PC-9 (cell line): ENCODE measurements at regions of chr5 and their contacts with region 1.

Region 1: DNA sequence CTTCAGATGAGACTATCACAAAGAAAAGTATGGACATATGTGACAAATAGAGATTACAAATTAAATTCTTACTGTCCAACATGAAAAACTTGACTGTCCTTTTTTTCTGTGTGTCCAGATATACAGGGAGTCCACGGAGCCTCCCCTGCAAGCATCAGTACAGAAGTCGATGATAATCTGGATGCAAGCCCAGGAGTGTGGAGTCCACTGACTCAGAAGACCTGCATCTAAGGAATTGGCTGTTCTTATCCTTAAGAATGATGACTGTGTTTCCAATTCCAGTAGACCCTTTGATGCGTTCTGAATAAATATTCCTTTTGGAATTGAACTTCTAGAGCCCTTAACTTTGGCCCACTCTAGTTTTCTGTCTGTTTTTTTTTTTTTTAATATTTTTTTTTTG is 56.7 kb upstream of the TAF11L2 start:
- DNase-seq: no peak
- H3K4me3 ChIP-seq: no peak overlapping the region
- H3K27ac ChIP-seq: no peak overlapping the region
- H3K4me1 ChIP-seq: peaks cover 12% of the 10 kb centered on the region
- H3K27me3 ChIP-seq: peaks cover 22% of the 10 kb centered on the region
- CTCF ChIP-seq: no peak

Region 2: DNA sequence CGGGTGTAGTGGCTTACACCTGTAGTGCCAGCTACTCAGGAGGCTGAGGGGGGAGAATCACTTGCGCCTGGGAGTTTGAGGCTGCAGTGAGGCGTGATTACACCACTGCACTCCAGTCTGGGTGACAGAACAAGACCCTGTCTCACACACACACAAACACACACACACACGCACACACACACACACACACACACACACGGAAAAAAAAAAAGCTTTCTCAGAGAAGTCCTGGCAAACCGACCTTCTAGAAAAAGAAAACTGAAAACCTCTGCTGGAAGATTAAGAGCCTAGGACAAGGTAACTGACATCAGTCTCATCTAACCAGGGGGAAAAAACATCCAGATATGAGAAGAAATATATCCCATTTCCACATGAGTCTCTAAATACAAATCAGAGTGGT is 684.2 kb before region 1 on chr5:
- CTCF ChIA-PET with region 1: no interaction called
- POLR2A ChIA-PET with region 1: interaction called, 21 read pairs
- intact Hi-C with region 1: no loop called
- DNase-seq: no peak
- H3K4me3 ChIP-seq: no peak overlapping the region
- H3K27ac ChIP-seq: no peak overlapping the region
- H3K4me1 ChIP-seq: no peaks in the 10 kb centered on the region
- H3K27me3 ChIP-seq: no peaks in the 10 kb centered on the region
- CTCF ChIP-seq: no peak

Region 3: GRCh38 chr5:17396247-17396646 is 45.1 kb before region 1 on chr5:
- CTCF ChIA-PET with region 1: no interaction called
- POLR2A ChIA-PET with region 1: interaction called, 12 read pairs
- intact Hi-C with region 1: no loop called
- DNase-seq: no peak
- H3K4me3 ChIP-seq: no peak overlapping the region
- H3K27ac ChIP-seq: no peak overlapping the region
- H3K4me1 ChIP-seq: peaks cover 14% of the 10 kb centered on the region; the same call in 1 of the 2 replicates
- H3K27me3 ChIP-seq: no peaks in the 10 kb centered on the region
- CTCF ChIP-seq: no peak

Region 4: GRCh38 chr5:17813214-17813613 is 371.9 kb after region 1 on chr5:
- CTCF ChIA-PET with region 1: no interaction called
- POLR2A ChIA-PET with region 1: no interaction called
- intact Hi-C with region 1: no loop called
- DNase-seq: no peak
- H3K4me3 ChIP-seq: no peak overlapping the region
- H3K27ac ChIP-seq: no peak overlapping the region
- H3K4me1 ChIP-seq: no peaks in the 10 kb centered on the region
- H3K27me3 ChIP-seq: no peaks in the 10 kb centered on the region
- CTCF ChIP-seq: no peak